ENCODE measurements at regions of chr11 and their contacts with region 1.

Region 1: DNA sequence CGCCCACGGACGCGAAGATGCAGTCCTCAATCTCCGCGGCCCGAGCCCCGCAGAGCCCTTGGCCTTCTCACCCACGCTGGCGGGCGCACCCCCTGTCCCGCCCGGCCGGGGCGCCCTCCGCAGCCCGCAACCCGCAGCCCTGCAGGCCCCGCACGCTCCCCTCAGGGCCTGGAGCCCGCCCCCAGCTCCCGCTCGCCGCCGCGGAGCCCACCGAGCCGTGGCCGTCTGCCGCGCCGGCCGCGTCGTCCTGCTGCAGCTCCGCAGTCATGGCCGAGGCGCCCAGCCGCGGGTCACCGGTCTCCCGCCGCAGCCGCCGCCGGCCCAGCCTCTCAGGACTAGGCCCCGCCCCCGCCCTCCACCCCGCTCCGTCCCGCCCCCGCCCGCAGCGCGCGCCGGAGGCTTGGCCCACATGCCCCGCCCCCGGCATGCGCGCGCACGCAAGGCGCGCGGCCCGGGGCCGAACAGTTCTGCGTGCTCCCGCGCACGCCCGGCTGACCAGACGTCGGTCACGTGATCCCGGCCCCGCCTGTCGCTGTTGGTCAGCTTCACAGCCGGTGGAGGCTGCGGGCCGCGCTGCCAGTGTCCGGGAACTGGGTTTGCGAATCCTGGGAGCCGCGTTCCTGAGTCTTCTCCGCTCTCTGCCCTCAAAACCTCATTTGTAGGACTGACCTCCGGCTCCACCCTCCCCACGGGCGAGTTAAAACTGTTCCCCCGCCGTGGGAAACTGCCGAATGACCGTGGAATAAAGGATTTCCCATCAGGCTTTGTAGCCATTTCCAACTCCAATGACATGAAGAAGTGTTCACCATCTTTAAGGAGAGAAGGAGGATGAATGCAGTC is at the start of gene USP28:
- DNase-seq: peak; percentile 92
- ATAC-seq: peak; percentile 86
- H3K4me3 Mint-ChIP-seq: peak within 1 kb of the TSS; percentile 96
- H3K27ac Mint-ChIP-seq: peak within 1 kb of the TSS; percentile 97
- H3K4me1 Mint-ChIP-seq: peaks cover 66% of the 10 kb centered on the region
- H3K27me3 Mint-ChIP-seq: no peaks in the 10 kb centered on the region
- CTCF ChIP-seq: no peak
- total RNA-seq, gene USP28: 39.6 and 49.6 TPM in 2 replicates

Region 2: GRCh38 chr11:113789675-113790320 is 85.7 kb before region 1 on chr11:
- CTCF ChIA-PET with region 1: no interaction called
- POLR2A ChIA-PET with region 1: interaction called, 13 read pairs
- intact Hi-C with region 1: no loop called
- DNase-seq: no peak
- ATAC-seq: no peak
- H3K4me3 Mint-ChIP-seq: no peak overlapping the region
- H3K27ac Mint-ChIP-seq: no peak overlapping the region
- H3K4me1 Mint-ChIP-seq: no peaks in the 10 kb centered on the region
- H3K27me3 Mint-ChIP-seq: peaks cover 15% of the 10 kb centered on the region
- CTCF ChIP-seq: no peak

Region 3: DNA sequence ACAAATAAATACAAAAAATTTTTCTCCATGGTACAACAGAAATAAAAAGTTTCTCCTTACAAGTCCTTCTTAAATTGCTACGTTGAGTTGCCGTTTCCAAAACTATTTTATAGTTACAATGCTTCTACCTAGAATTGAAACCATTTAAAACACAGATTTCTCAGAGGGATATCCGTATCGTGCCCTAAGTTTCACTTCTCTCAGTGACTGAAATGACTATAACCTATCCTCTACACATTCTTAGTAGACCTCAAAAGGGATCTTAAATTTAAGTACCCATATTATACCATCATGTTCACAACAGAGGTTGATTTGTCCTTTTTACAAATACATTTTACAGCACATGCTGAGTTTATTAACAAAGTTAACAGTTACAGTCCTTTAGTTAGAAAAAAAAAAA is 44.1 kb before region 1 on chr11:
- CTCF ChIA-PET with region 1: no interaction called
- POLR2A ChIA-PET with region 1: interaction called, 10 read pairs
- intact Hi-C with region 1: loop called (anchors 2 kb)
- DNase-seq: no peak
- ATAC-seq: peak; percentile 93
- H3K4me3 Mint-ChIP-seq: peak overlapping the region; percentile 68
- H3K27ac Mint-ChIP-seq: peak overlapping the region; percentile 84
- H3K4me1 Mint-ChIP-seq: peaks cover 31% of the 10 kb centered on the region
- H3K27me3 Mint-ChIP-seq: no peaks in the 10 kb centered on the region
- CTCF ChIP-seq: no peak

Region 4: DNA sequence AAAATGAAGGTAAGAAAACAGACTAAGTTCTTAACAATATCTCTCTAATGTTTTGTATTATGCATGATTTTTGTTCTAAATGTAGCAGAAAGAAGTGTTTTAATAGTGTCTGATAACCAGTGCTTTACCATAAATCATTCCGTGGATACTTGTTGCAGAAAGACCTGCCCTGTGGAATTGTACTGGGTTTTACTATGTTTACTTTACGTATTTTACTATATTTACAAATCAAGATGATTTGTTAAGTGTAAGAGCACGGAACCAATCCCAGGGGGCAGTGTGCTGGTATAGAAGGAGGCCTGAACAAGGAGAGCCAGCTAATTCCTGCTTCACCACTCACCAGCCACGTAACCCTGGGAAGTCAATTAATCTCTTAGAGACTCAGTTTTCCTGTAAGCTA is 30.6 kb after region 1 on chr11:
- CTCF ChIA-PET with region 1: no interaction called
- POLR2A ChIA-PET with region 1: no interaction called
- intact Hi-C with region 1: no loop called
- DNase-seq: no peak
- ATAC-seq: no peak
- H3K4me3 Mint-ChIP-seq: no peak overlapping the region
- H3K27ac Mint-ChIP-seq: no peak overlapping the region
- H3K4me1 Mint-ChIP-seq: peaks cover 5% of the 10 kb centered on the region
- H3K27me3 Mint-ChIP-seq: peaks cover 5% of the 10 kb centered on the region
- CTCF ChIP-seq: no peak

Region 5: GRCh38 chr11:113974741-113975470 is 99.5 kb after region 1 on chr11 and contains the start of gene HTR3A:
- CTCF ChIA-PET with region 1: no interaction called
- POLR2A ChIA-PET with region 1: interaction called, 22 read pairs
- intact Hi-C with region 1: loop called (anchors 1 kb)
- DNase-seq: no peak
- ATAC-seq: no peak
- H3K4me3 Mint-ChIP-seq: peak within 1 kb of the TSS; percentile 42
- H3K27ac Mint-ChIP-seq: peak within 1 kb of the TSS; percentile 50
- H3K4me1 Mint-ChIP-seq: peaks cover 64% of the 10 kb centered on the region
- H3K27me3 Mint-ChIP-seq: no peaks in the 10 kb centered on the region
- CTCF ChIP-seq: no peak
- total RNA-seq, gene HTR3A: 15.3 and 15.6 TPM in 2 replicates

Region 6: DNA sequence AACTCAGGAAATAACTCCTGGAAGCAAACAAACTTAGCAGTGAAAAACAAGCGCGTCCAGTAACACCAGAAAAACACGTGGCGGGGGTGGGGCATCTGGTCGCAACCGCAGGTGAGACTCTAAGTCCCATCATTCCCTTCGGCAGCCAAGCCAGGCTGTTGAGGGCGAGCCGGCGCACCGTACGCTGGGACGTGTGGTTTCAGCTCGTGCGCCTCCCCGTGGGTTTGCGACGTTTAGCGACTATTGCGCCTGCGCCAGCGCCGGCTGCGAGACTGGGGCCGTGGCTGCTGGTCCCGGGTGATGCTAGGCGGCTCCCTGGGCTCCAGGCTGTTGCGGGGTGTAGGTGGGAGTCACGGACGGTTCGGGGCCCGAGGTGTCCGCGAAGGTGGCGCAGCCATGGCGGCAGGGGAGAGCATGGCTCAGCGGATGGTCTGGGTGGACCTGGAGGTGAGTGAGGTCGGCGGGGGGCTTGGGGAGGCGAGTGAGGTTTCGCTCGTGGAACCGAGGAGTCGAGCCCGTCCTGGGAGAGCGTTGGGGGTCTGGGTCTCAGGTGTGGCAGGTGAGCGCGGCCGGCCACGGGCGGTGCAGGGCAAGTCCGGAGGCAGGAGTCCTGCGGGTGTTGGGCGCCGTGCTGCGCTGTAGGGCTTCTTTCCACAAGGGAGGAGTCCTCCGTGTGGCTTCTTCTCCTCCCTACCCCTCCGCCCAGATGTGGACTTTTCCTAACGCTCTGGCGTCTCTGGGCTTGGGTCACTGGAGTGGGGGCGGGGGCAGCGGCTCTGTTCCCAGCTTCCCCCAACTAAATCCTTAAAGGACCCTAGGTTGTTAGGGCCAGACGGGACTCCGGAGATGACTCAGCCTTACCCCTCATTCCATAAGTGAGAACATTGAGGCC is 564.0 kb after region 1 on chr11 and contains the start of gene REXO2:
- CTCF ChIA-PET with region 1: no interaction called
- POLR2A ChIA-PET with region 1: interaction called, 3 read pairs
- intact Hi-C with region 1: loop called (anchors 10 kb)
- DNase-seq: peak; percentile 85
- ATAC-seq: peak; percentile 99
- H3K4me3 Mint-ChIP-seq: peak within 1 kb of the TSS; percentile 97
- H3K27ac Mint-ChIP-seq: peak within 1 kb of the TSS; percentile 87
- H3K4me1 Mint-ChIP-seq: peaks cover 17% of the 10 kb centered on the region
- H3K27me3 Mint-ChIP-seq: no peaks in the 10 kb centered on the region
- CTCF ChIP-seq: no peak
- total RNA-seq, gene REXO2: 26.1 and 27.3 TPM in 2 replicates

Measured in activated B cell treated with CpG ODN at 0.5 μM for 24 hours (primary cell).